Endothelial cell of umbilical vein (primary cell): ENCODE measurements at regions of chr12 and their contacts with region 1.

Region 1: DNA sequence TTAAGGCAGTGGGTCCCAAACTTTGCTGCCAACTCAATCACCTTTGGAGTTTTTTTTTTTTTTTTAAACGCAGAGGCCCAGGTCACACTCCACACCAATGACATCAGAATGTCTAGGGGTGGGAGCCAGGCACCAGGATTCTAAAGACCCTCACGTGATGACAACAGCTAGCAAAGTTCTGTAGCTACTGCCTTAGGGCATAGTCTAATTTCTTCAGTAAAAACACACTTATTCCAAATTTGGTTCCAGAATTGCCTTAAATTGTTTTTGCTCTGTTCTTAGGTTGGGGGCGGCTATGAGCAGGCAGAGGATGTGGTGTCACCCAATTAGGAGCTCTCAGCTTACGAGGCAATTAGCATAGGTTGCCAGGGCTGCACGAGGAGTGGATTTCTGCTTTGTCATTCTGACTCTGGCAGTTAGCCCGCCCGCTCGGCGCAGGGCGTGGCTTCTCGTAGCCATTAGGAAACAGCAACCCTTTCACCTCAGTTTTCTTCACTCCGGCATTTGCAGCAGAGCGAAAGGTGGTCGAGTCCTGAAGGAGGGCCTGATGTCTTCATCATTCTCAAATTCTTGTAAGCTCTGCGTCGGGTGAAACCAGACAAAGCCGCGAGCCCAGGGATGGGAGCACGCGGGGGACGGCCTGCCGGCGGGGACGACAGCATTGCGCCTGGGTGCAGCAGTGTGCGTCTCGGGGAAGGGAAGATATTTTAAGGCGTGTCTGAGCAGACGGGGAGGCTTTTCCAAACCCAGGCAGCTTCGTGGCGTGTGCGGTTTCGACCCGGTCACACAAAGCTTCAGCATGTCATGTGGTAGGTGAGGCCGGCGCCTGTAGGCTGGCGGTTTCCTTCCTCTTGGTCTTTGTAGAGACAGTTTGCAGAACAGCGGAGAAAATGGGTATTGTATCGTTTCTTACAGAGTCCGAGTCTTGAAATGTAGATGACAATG is 16.7 kb upstream of the EID3 start:
- DNase-seq: peak; percentile 99
- H3K4me3 ChIP-seq: peak overlapping the region; percentile 67 to 98 (median 76)
- H3K27ac ChIP-seq: peak overlapping the region; percentile 78
- H3K4me1 ChIP-seq: peaks cover 34% of the 10 kb centered on the region
- H3K27me3 ChIP-seq: no peaks in the 10 kb centered on the region
- CTCF ChIP-seq: no peak
- POLR2A ChIP-seq: peak; percentile 96

Region 2: GRCh38 chr12:104137913-104138796 is 148.7 kb before region 1 on chr12 and contains the start of gene NFYB:
- CTCF ChIA-PET with region 1: no interaction called
- POLR2A ChIA-PET with region 1: interaction called, 8 read pairs
- dilution Hi-C with region 1: no loop called
- intact Hi-C with region 1: loop called (anchors 5 kb)
- DNase-seq: peak; percentile 97
- H3K4me3 ChIP-seq: peak within 1 kb of the TSS; percentile 46 to 96 (median 65)
- H3K27ac ChIP-seq: peak within 1 kb of the TSS; percentile 52
- H3K4me1 ChIP-seq: peaks cover 18% of the 10 kb centered on the region
- H3K27me3 ChIP-seq: peaks cover 0 to 2% of the 10 kb centered on the region in 2 experiments
- CTCF ChIP-seq: no peak
- POLR2A ChIP-seq: peak; percentile 89
- total RNA-seq, gene NFYB: 18.9 and 23.3 TPM in 2 replicates

Region 3: DNA sequence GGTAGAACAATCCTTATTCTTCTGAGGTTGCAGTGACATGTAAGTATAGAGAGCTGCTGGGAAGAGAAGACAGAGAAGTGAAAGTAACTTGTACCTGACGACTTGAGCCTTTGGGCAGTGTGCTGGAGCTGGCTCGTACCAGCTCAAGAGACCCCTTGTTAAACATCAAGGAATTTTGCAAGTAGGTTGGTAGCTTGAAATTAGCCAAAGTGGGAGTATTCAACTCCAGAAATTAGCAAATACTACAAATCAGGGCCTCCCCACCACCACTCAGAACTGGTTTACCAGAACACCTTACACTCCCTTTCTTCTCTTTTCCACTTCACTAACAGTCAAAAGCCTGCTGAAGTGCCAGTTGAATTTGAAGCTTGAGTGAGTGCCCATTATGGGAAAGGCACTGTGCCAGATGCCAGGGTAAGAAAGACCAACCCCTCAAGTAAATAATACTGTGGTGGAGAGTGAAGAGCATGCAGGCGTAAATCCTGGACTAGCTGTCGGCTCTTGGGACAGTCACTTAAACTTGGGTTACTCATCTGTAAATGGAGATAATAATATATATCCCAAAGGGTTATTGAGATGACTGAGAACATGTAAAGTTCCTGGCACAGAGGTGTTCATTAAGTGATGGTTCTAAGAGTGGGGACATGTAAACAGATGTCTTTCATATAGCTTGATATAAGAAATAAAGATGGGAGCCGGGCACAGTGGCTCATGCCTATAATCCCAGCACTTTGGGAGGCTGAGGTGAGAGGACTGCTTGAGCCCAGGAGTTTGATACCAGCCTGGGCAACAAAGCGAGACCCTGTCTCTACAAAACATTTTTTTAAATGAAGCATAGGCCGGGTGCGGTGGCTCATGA is 10.3 kb before region 1 on chr12:
- CTCF ChIA-PET with region 1: interaction called, 11 read pairs
- POLR2A ChIA-PET with region 1: interaction called, 7 read pairs
- dilution Hi-C with region 1: no loop called
- intact Hi-C with region 1: no loop called
- DNase-seq: no peak
- H3K4me3 ChIP-seq: no peak overlapping the region
- H3K27ac ChIP-seq: no peak overlapping the region
- H3K4me1 ChIP-seq: peaks cover 34% of the 10 kb centered on the region
- H3K27me3 ChIP-seq: no peaks in the 10 kb centered on the region
- CTCF ChIP-seq: no peak
- POLR2A ChIP-seq: no peak

Region 4: GRCh38 chr12:104303538-104304151 is 16.8 kb after region 1 on chr12 and contains the start of gene EID3:
- CTCF ChIA-PET with region 1: interaction called, 3 read pairs
- POLR2A ChIA-PET with region 1: interaction called, 10 read pairs
- dilution Hi-C with region 1: no loop called
- intact Hi-C with region 1: no loop called
- DNase-seq: peak; percentile 86
- H3K4me3 ChIP-seq: peak within 1 kb of the TSS; percentile 11 to 37 (median 36)
- H3K27ac ChIP-seq: peak within 1 kb of the TSS; percentile 46
- H3K4me1 ChIP-seq: peaks cover 67% of the 10 kb centered on the region
- H3K27me3 ChIP-seq: no peaks in the 10 kb centered on the region
- CTCF ChIP-seq: no peak
- POLR2A ChIP-seq: peak; percentile 46
- total RNA-seq, gene EID3: 12.7 and 14.5 TPM in 2 replicates

Region 5: GRCh38 chr12:105107494-105108371 is 820.9 kb after region 1 on chr12 and contains the start of gene WASHC4:
- CTCF ChIA-PET with region 1: no interaction called
- POLR2A ChIA-PET with region 1: no interaction called
- dilution Hi-C with region 1: no loop called
- intact Hi-C with region 1: loop called (anchors 5 kb)
- DNase-seq: peak; percentile 94
- H3K4me3 ChIP-seq: peak within 1 kb of the TSS; percentile 94 to 99 (median 96)
- H3K27ac ChIP-seq: peak within 1 kb of the TSS; percentile 68
- H3K4me1 ChIP-seq: peaks cover 24% of the 10 kb centered on the region
- H3K27me3 ChIP-seq: no peaks in the 10 kb centered on the region
- CTCF ChIP-seq: peak in 1 of 2 donors; percentile 7
- POLR2A ChIP-seq: peak; percentile 99
- total RNA-seq, gene WASHC4: 99.8 and 123 TPM in 2 replicates